ENCODE measurements at regions of chr12 and their contacts with region 1.

Region 1: GRCh38 chr12:120534703-120535655 is 823 bp downstream of the RNF10 start:
- DNase-seq: no peak
- H3K4me3 ChIP-seq: peak overlapping the region; percentile 80 to 97 (median 88)
- H3K27ac ChIP-seq: peak overlapping the region; percentile 96 to 98 (median 96)
- H3K4me1 ChIP-seq: peaks cover 44 to 57% (median 54%) of the 10 kb centered on the region in 4 donors
- H3K27me3 ChIP-seq: no peaks in the 10 kb centered on the region
- CTCF ChIP-seq: no peak
- EP300 ChIP-seq: no peak
- POLR2A ChIP-seq: no peak

Region 2: DNA sequence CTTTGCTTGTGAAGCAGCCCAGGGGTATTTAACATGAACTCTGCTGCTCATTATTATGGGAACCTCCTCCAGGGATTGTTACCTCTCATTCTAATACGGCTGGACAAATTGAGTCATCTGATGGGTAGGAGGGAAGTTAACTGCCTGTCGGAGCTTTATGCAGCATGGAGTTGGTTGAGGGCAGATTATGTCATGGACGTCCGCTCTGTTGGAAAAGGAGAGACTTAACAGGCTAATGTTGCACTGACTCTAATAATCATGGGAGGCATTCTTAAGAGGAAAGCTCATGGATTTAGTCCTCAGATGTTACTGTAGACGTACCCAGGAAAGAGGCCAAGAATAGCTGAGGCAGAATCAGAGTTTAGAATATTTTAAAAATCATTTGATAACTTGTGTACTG is 36.3 kb after region 1 on chr12:
- intact Hi-C with region 1: loop called (anchors 5 kb)
- DNase-seq: no peak
- H3K4me3 ChIP-seq: no peak overlapping the region
- H3K27ac ChIP-seq: no peak overlapping the region
- H3K4me1 ChIP-seq: peaks cover 0 to 6% (median 3%) of the 10 kb centered on the region in 4 donors
- H3K27me3 ChIP-seq: no peaks in the 10 kb centered on the region
- CTCF ChIP-seq: no peak
- EP300 ChIP-seq: no peak
- POLR2A ChIP-seq: no peak

Measured in esophagus muscularis mucosa (tissue), 4 donors.